K562 (cell line): ENCODE measurements at regions of chr3 and their contacts with region 1.

Region 1: DNA sequence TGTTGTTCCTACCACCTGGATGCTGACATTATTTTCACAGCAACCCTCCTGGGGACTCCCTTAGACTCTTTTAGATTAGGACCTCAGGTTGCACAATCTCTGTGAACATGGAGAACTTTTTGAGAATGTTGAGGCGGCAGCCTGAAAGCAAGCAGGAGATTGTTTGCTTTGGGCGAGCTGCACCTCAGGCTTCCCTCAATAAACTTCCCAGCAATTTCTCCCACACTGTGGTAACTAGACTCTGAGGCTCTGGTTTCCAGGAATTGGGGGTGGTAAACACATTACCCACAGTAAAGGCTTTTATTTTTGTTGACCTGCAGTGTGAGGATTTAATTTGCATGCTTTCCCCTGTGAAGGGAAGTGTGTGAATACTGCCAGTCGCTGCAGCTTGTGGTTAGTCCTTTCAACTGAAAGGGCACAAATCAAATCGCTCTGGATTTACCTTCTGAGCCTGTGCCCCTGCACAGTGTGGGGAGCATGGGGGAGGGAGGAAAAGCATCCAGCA is 35.2 kb upstream of the SIAH2 start:
- DNase-seq: no peak
- ATAC-seq: no peak
- H3K4me3 ChIP-seq: no peak overlapping the region
- H3K27ac ChIP-seq: no peak overlapping the region
- H3K4me1 ChIP-seq: no peaks in the 10 kb centered on the region
- H3K27me3 ChIP-seq: peaks cover 11 to 28% of the 10 kb centered on the region in 2 experiments; a peak in 4 of 5 replicates
- CTCF ChIP-seq: no peak
- EP300 ChIP-seq: no peak
- POLR2A ChIP-seq: no peak
- RAD21 ChIP-seq: no peak

Region 2: GRCh38 chr3:149879872-149880271 is 918.3 kb before region 1 on chr3:
- CTCF ChIA-PET with region 1: no interaction called
- POLR2A ChIA-PET with region 1: no interaction called
- in situ Hi-C with region 1: no loop called
- intact Hi-C with region 1: no loop called
- DNase-seq: peak; percentile 6 to 55 (median 8)
- ATAC-seq: peak; percentile 94
- H3K4me3 ChIP-seq: no peak overlapping the region
- H3K27ac ChIP-seq: no peak overlapping the region
- H3K4me1 ChIP-seq: no peaks in the 10 kb centered on the region; a peak in 1 of 5 replicates
- H3K27me3 ChIP-seq: no peaks in the 10 kb centered on the region
- CTCF ChIP-seq: peak; percentile 31 to 60 (median 59); a peak in 5 of 6 replicates
- EP300 ChIP-seq: no peak
- POLR2A ChIP-seq: no peak
- RAD21 ChIP-seq: no peak; a peak in 1 of 4 replicates

Region 3: DNA sequence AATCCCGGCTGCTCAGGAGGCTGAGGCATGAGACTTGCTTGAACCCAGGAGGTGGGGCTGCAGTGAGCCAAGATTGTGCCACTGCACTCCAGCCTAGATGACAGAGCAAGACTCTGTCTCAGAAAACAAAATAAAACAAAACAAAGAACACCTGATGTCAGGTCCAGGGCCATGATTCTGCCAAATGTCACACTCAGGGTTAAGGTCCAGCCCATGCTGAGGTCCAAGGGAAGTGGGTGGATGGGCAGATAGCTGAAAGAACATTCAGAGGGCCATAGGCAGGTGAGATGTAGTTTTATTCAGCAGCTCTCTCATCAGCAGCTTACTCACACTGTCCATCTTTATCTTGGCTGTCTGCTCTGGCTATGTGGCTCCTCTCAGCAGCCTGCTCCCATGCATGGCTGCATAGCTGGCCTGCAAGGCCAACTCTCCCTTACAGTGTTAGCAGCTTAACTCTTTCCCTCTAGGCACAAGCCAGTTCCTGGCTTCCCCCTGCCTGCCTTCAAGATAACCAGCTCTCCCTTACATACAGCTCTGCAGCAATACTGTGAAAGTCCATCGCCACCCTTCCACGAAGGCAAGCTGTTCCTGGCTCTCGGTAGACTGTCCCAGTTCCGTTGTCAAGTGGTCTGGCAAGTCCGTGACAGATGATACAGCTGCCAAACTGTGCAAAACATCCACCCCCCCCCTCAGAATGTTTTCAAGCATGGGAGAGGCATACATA is 27.2 kb after region 1 on chr3:
- CTCF ChIA-PET with region 1: no interaction called
- POLR2A ChIA-PET with region 1: no interaction called
- in situ Hi-C with region 1: no loop called
- intact Hi-C with region 1: no loop called
- DNase-seq: no peak
- ATAC-seq: peak; percentile 32; the same call in 2 of the 3 replicates
- H3K4me3 ChIP-seq: no peak overlapping the region
- H3K27ac ChIP-seq: no peak overlapping the region
- H3K4me1 ChIP-seq: no peaks in the 10 kb centered on the region; a peak in 1 of 5 replicates
- H3K27me3 ChIP-seq: peaks cover 33 to 41% of the 10 kb centered on the region in 2 experiments
- CTCF ChIP-seq: no peak
- EP300 ChIP-seq: no peak
- POLR2A ChIP-seq: no peak
- RAD21 ChIP-seq: no peak

Region 4: DNA sequence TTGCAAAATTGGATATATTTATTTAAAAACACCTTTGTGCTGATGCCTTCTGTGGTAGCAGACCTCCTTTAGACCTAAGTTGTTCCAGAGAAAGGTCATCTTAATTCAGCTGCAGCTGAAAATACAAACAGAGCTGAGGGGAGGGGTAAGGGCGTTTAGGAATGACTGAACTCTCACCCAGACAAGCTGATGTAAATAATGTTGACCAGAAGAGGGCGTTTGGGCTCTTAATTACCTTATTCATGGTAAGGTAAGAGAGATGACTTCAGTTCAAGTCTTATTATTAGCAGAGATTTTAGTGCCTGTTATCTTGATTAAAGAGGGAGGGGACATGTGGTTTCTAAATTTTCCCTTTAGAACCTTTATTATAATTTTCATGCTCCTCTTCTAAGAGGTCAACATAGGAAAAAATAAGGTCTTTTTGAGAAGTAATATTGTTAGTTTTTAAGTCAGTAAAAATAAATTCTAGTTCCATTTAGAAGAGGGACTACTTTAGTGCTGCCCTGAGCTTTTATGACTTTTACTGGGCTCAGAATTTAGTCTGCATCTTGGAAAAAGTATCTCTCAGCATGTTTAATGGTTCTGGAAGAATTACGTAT is 358.5 kb after region 1 on chr3:
- CTCF ChIA-PET with region 1: no interaction called
- POLR2A ChIA-PET with region 1: no interaction called
- in situ Hi-C with region 1: loop called (anchors 10 kb)
- intact Hi-C with region 1: no loop called
- DNase-seq: peak; percentile 41 to 63 (median 45)
- ATAC-seq: peak; percentile 85
- H3K4me3 ChIP-seq: no peak overlapping the region
- H3K27ac ChIP-seq: no peak overlapping the region
- H3K4me1 ChIP-seq: no peaks in the 10 kb centered on the region
- H3K27me3 ChIP-seq: peaks cover 4 to 20% of the 10 kb centered on the region in 2 experiments; a peak in 4 of 5 replicates
- CTCF ChIP-seq: peak; percentile 39 to 62 (median 54); a peak in 5 of 6 replicates
- EP300 ChIP-seq: no peak
- POLR2A ChIP-seq: no peak
- RAD21 ChIP-seq: peak in 1 of 2 experiments; percentile 37; a peak in 1 of 4 replicates